GM12878 (cell line): ENCODE measurements at regions of chr19 and their contacts with region 1.

Region 1: GRCh38 chr19:7272856-7273578 is 21.2 kb downstream of the INSR start:
- DNase-seq: peak; percentile 64
- ATAC-seq: peak; percentile 97
- H3K4me3 ChIP-seq: peak overlapping the region; percentile 9; the same call in 1 of the 2 replicates
- H3K27ac ChIP-seq: peak overlapping the region; percentile 79
- H3K4me1 ChIP-seq: peaks cover 27% of the 10 kb centered on the region
- H3K27me3 ChIP-seq: no peaks in the 10 kb centered on the region
- CTCF ChIP-seq: no peak
- EP300 ChIP-seq: peak in 1 of 2 experiments; percentile 75; a peak in 2 of 4 replicates
- POLR2A ChIP-seq: no peak
- RAD21 ChIP-seq: no peak

Region 2: GRCh38 chr19:7250951-7251893 is 21.8 kb before region 1 on chr19:
- CTCF ChIA-PET with region 1: interaction called, 4 read pairs
- POLR2A ChIA-PET with region 1: interaction called, 3 read pairs
- RAD21 ChIA-PET with region 1: interaction called, 10 read pairs
- SMC1A ChIA-PET with region 1: interaction called, 20 read pairs
- in situ Hi-C with region 1: no loop called
- intact Hi-C with region 1: no loop called
- DNase-seq: no peak
- ATAC-seq: peak; percentile 63
- H3K4me3 ChIP-seq: no peak overlapping the region
- H3K27ac ChIP-seq: peak overlapping the region; percentile 31; the same call in 1 of the 2 replicates
- H3K4me1 ChIP-seq: peaks cover 8% of the 10 kb centered on the region
- H3K27me3 ChIP-seq: no peaks in the 10 kb centered on the region
- CTCF ChIP-seq: no peak
- EP300 ChIP-seq: no peak
- POLR2A ChIP-seq: no peak
- RAD21 ChIP-seq: no peak

Region 3: GRCh38 chr19:7257148-7258034 is 15.6 kb before region 1 on chr19:
- CTCF ChIA-PET with region 1: no interaction called
- POLR2A ChIA-PET with region 1: interaction called, 5 read pairs
- RAD21 ChIA-PET with region 1: interaction called, 4 read pairs
- SMC1A ChIA-PET with region 1: interaction called, 15 read pairs
- in situ Hi-C with region 1: no loop called
- intact Hi-C with region 1: no loop called
- DNase-seq: no peak
- ATAC-seq: no peak
- H3K4me3 ChIP-seq: no peak overlapping the region
- H3K27ac ChIP-seq: no peak overlapping the region
- H3K4me1 ChIP-seq: no peaks in the 10 kb centered on the region; the same call in 1 of the 2 replicates
- H3K27me3 ChIP-seq: no peaks in the 10 kb centered on the region
- CTCF ChIP-seq: no peak
- EP300 ChIP-seq: no peak
- POLR2A ChIP-seq: no peak
- RAD21 ChIP-seq: no peak

Region 4: GRCh38 chr19:7366701-7367420 is 93.8 kb after region 1 on chr19:
- CTCF ChIA-PET with region 1: no interaction called
- POLR2A ChIA-PET with region 1: no interaction called
- RAD21 ChIA-PET with region 1: no interaction called
- SMC1A ChIA-PET with region 1: no interaction called
- in situ Hi-C with region 1: no loop called
- intact Hi-C with region 1: no loop called
- DNase-seq: no peak
- ATAC-seq: peak; percentile 90
- H3K4me3 ChIP-seq: no peak overlapping the region
- H3K27ac ChIP-seq: no peak overlapping the region
- H3K4me1 ChIP-seq: no peaks in the 10 kb centered on the region
- H3K27me3 ChIP-seq: no peaks in the 10 kb centered on the region
- CTCF ChIP-seq: peak; percentile 65 to 69 (median 66)
- EP300 ChIP-seq: no peak
- POLR2A ChIP-seq: no peak
- RAD21 ChIP-seq: peak; percentile 72